ENCODE measurements at regions of chr10 and their contacts with region 1.

Region 1: DNA sequence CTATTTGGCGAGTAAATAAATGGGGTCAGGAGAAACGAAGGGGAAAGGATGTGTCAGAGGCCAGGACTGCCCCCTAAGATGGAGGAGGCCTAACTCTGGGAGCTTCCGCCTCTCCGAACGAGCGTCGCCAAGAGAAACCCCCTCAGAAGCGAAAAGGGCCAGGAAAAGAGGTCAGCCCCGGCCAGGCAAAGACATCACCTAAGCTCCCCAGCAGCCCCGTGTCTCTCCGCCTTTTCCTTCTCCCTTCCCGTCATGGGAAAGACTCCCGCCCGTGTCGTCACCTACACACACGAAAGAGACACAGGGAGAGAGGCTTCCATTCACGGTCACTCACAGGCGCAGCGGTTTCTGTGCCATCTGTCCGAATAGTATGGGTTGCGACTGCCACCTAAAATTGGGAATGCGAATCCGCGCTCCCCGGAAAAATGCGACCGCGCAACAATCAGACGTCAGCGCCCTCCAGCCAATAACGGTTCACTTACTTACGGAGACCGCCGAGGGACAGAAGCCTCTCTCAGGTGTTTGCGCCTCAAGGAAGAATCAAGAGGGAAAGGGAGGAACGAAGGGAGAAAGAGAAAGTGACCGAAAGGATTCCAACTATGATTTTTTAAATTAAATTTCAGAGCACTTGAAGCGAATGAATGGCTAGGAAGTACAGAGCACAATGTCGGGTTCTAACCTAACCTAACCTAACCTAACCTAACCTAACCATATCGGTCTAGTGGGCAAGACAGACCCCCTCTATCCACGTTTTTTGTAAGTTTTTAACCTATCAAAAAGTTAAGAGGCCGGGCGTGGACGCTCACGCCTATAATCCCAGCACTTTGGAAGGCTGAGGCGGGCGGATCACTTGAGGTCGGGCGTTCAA is at the start of gene CWF19L1:
- DNase-seq: peak; percentile 70 to 87
- ATAC-seq: peak; percentile 83 to 91 (median 83)
- H3K4me3 ChIP-seq: peak within 1 kb of the TSS; percentile 95
- H3K4me3 Mint-ChIP-seq: peak within 1 kb of the TSS; percentile 99
- H3K27ac ChIP-seq: peak within 1 kb of the TSS; percentile 80
- H3K27ac Mint-ChIP-seq: peak within 1 kb of the TSS; percentile 97
- H3K4me1 ChIP-seq: peaks cover 15% of the 10 kb centered on the region
- H3K4me1 Mint-ChIP-seq: peaks cover 31 to 32% of the 10 kb centered on the region in 2 donors
- H3K27me3 ChIP-seq: no peaks in the 10 kb centered on the region
- H3K27me3 Mint-ChIP-seq: no peaks in the 10 kb centered on the region
- CTCF ChIP-seq: no peak
- total RNA-seq, gene CWF19L1: 52.5 to 58.0 (median 54.8) TPM

Region 2: GRCh38 chr10:100185364-100186252 is 81.9 kb before region 1 on chr10 and contains the start of gene ERLIN1:
- intact Hi-C with region 1: loop called (anchors 1 kb)
- DNase-seq: peak; percentile 93 to 95
- ATAC-seq: peak; percentile 92 to 96 (median 95)
- H3K4me3 ChIP-seq: peak within 1 kb of the TSS; percentile 92
- H3K4me3 Mint-ChIP-seq: peak within 1 kb of the TSS; percentile 98
- H3K27ac ChIP-seq: peak within 1 kb of the TSS; percentile 70
- H3K27ac Mint-ChIP-seq: peak within 1 kb of the TSS; percentile 92 to 98
- H3K4me1 ChIP-seq: peaks cover 19% of the 10 kb centered on the region
- H3K4me1 Mint-ChIP-seq: peaks cover 44 to 50% of the 10 kb centered on the region in 2 donors
- H3K27me3 ChIP-seq: no peaks in the 10 kb centered on the region
- H3K27me3 Mint-ChIP-seq: no peaks in the 10 kb centered on the region
- CTCF ChIP-seq: no peak
- total RNA-seq, gene ERLIN1: 3.9 to 6.9 (median 5.1) TPM

Region 3: GRCh38 chr10:100229819-100230422 is 37.5 kb before region 1 on chr10:
- intact Hi-C with region 1: loop called (anchors 1 kb)
- DNase-seq: no peak
- ATAC-seq: no peak
- H3K4me3 ChIP-seq: peak overlapping the region; percentile 99
- H3K4me3 Mint-ChIP-seq: peak overlapping the region; percentile 90
- H3K27ac ChIP-seq: peak overlapping the region; percentile 84
- H3K27ac Mint-ChIP-seq: peak overlapping the region; percentile 64 to 91
- H3K4me1 ChIP-seq: peaks cover 17% of the 10 kb centered on the region
- H3K4me1 Mint-ChIP-seq: peaks cover 28 to 37% of the 10 kb centered on the region in 2 donors
- H3K27me3 ChIP-seq: no peaks in the 10 kb centered on the region
- H3K27me3 Mint-ChIP-seq: no peaks in the 10 kb centered on the region
- CTCF ChIP-seq: no peak